Thyroid gland (tissue), 4 donors: ENCODE measurements at regions of chr18 and their contacts with region 1.

Region 1: DNA sequence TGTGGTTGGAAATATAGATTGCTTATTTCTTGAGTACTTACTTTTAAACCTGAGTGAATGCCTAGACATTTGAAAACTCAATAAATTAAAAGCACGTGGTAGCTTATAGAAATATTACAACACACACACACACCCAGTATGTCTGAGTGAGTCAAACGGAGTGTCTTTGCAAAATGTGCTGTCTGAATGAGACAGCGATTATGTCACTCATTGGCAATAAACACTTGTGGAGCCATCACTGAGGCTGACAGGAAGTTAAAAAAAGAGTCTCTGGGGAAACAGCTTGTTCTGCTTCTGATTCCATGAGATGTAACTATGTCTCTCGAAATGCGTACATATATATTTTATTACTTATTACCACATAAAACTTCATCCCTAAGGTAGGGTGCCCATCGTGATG is 22.3 kb upstream of the VPS4B start:
- DNase-seq: no peak
- H3K4me3 ChIP-seq: no peak overlapping the region
- H3K27ac ChIP-seq: no peak overlapping the region
- H3K4me1 ChIP-seq: peaks cover 0 to 8% of the 10 kb centered on the region in 2 donors
- H3K27me3 ChIP-seq: no peaks in the 10 kb centered on the region
- CTCF ChIP-seq: no peak
- POLR2A ChIP-seq: no peak

Region 2: DNA sequence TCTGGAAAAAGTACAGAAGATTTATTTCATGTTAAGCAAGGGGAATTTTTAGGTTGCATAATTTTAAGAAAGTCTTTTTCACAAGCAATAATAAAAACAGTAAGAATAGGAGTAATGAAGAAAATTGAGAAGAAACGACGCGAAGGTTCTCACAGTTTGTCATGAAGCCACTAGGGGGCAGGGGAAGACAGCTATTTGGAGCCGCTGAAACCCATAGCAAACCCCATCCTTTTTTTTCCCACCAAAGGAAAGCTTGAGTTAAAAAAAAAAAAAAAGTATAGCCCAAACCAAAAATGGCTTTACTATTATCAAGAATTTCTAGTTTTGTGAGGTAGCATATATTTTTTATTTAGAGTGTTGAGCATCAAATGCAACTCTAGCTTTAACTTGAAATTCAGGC is 428.3 kb before region 1 on chr18:
- intact Hi-C with region 1: loop called (anchors 10 kb)
- DNase-seq: peak; percentile 43 to 52
- H3K4me3 ChIP-seq: no peak overlapping the region
- H3K27ac ChIP-seq: no peak overlapping the region
- H3K4me1 ChIP-seq: no peaks in the 10 kb centered on the region
- H3K27me3 ChIP-seq: no peaks in the 10 kb centered on the region
- CTCF ChIP-seq: peak; percentile 49 to 86 (median 78)
- POLR2A ChIP-seq: no peak